Natural killer cell (primary cell): ENCODE measurements at regions of chr18 and their contacts with region 1.

Region 1: DNA sequence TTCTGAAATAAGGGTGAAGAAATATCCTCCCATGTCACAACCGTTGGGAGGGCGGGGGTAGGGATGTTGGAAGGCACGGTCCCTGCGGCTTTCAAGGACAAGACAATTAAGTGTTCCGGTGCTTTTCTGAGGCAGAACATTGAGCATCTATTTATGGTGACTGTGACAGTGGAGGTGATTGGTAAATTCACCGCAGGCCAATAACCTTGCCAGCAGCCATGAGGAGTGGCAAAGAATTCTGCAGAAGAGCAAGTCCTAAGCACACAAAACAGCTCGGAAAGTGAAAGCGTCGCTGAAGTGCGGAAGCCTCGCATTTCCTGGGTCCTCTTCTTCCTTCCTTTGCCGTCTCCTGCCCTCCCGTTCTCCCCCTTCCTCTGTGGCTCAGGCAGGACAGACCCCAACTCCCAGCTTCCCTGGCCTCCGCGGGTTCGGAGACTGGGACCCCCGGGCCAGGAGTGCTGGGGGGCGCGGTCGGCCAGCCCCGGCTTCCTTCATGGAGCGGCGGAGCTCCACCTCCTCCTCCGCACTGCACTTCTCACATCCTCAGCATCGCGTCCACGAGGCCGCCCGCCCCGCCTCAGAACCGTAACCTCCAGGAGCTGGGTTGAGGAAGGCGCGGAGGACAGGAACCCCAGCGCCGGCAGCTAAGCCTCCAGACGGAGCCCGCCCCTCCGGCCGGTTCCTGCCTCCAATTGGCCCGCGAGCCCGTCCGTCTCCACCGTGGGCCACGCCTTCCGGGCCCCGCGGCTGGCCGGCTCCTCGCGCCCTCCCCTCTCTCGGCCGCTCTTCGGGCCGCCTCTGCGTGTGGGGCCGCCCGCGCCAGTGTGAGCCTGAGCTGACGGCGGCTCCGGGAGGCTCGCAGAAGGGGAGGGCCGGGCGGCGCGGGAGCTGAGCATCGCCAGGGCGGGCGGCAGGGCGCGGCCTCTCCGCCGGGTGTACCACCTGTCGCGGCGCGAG is at the start of gene ME2:
- DNase-seq: peak; percentile 93 to 96
- ATAC-seq: peak; percentile 87 to 96 (median 89)
- H3K4me3 ChIP-seq: peak within 1 kb of the TSS; percentile 96
- H3K4me3 Mint-ChIP-seq: peak within 1 kb of the TSS; percentile 98
- H3K27ac ChIP-seq: peak within 1 kb of the TSS; percentile 99
- H3K27ac Mint-ChIP-seq: peak within 1 kb of the TSS; percentile 99 to 100
- H3K4me1 ChIP-seq: peaks cover 37% of the 10 kb centered on the region
- H3K4me1 Mint-ChIP-seq: peaks cover 22 to 27% of the 10 kb centered on the region in 2 donors
- H3K27me3 ChIP-seq: no peaks in the 10 kb centered on the region
- H3K27me3 Mint-ChIP-seq: peaks cover 0 to 7% of the 10 kb centered on the region in 2 donors
- CTCF ChIP-seq: no peak
- total RNA-seq, gene ME2: 42.4 to 61.3 (median 43.5) TPM

Region 2: GRCh38 chr18:50928551-50928950 is 49.9 kb after region 1 on chr18:
- intact Hi-C with region 1: no loop called
- DNase-seq: no peak
- ATAC-seq: no peak
- H3K4me3 ChIP-seq: no peak overlapping the region
- H3K4me3 Mint-ChIP-seq: no peak overlapping the region
- H3K27ac ChIP-seq: no peak overlapping the region
- H3K27ac Mint-ChIP-seq: no peak overlapping the region
- H3K4me1 ChIP-seq: no peaks in the 10 kb centered on the region
- H3K4me1 Mint-ChIP-seq: no peaks in the 10 kb centered on the region
- H3K27me3 ChIP-seq: no peaks in the 10 kb centered on the region
- H3K27me3 Mint-ChIP-seq: no peaks in the 10 kb centered on the region
- CTCF ChIP-seq: no peak

Region 3: GRCh38 chr18:50967714-50968661 is 89.4 kb after region 1 on chr18 and contains the start of gene ELAC1:
- intact Hi-C with region 1: loop called (anchors 1 kb)
- DNase-seq: peak; percentile 71 to 82
- ATAC-seq: peak; percentile 91 to 96 (median 93)
- H3K4me3 ChIP-seq: peak within 1 kb of the TSS; percentile 63
- H3K4me3 Mint-ChIP-seq: peak within 1 kb of the TSS; percentile 91
- H3K27ac ChIP-seq: peak within 1 kb of the TSS; percentile 83
- H3K27ac Mint-ChIP-seq: peak within 1 kb of the TSS; percentile 58 to 73
- H3K4me1 ChIP-seq: peaks cover 7% of the 10 kb centered on the region
- H3K4me1 Mint-ChIP-seq: peaks cover 17 to 25% of the 10 kb centered on the region in 2 donors
- H3K27me3 ChIP-seq: no peaks in the 10 kb centered on the region
- H3K27me3 Mint-ChIP-seq: no peaks in the 10 kb centered on the region
- CTCF ChIP-seq: no peak
- total RNA-seq, gene ELAC1: 7.9 to 10.0 (median 8.9) TPM

Region 4: GRCh38 chr18:51051105-51051712 is 172.6 kb after region 1 on chr18:
- intact Hi-C with region 1: loop called (anchors 5 kb)
- DNase-seq: peak in 1 of 2 donors; percentile 79
- ATAC-seq: peak; percentile 74 to 85 (median 84)
- H3K4me3 ChIP-seq: no peak overlapping the region
- H3K4me3 Mint-ChIP-seq: no peak overlapping the region
- H3K27ac ChIP-seq: no peak overlapping the region
- H3K27ac Mint-ChIP-seq: peak overlapping the region; percentile 69 to 81
- H3K4me1 ChIP-seq: no peaks in the 10 kb centered on the region
- H3K4me1 Mint-ChIP-seq: peaks cover 23 to 35% of the 10 kb centered on the region in 2 donors
- H3K27me3 ChIP-seq: no peaks in the 10 kb centered on the region
- H3K27me3 Mint-ChIP-seq: no peaks in the 10 kb centered on the region
- CTCF ChIP-seq: peak; percentile 89

Region 5: GRCh38 chr18:51197661-51198424 is 319.2 kb after region 1 on chr18 and contains the start of gene MEX3C:
- intact Hi-C with region 1: loop called (anchors 5 kb)
- DNase-seq: peak; percentile 99 to 100
- ATAC-seq: peak; percentile 79 to 93 (median 79)
- H3K4me3 ChIP-seq: peak within 1 kb of the TSS; percentile 76
- H3K4me3 Mint-ChIP-seq: peak within 1 kb of the TSS; percentile 97
- H3K27ac ChIP-seq: peak within 1 kb of the TSS; percentile 91
- H3K27ac Mint-ChIP-seq: peak within 1 kb of the TSS; percentile 93 to 97
- H3K4me1 ChIP-seq: peaks cover 17% of the 10 kb centered on the region
- H3K4me1 Mint-ChIP-seq: peaks cover 61 to 63% of the 10 kb centered on the region in 2 donors
- H3K27me3 ChIP-seq: no peaks in the 10 kb centered on the region
- H3K27me3 Mint-ChIP-seq: no peaks in the 10 kb centered on the region
- CTCF ChIP-seq: no peak
- total RNA-seq, gene MEX3C: 189 to 205 (median 202) TPM